Vagina (tissue), 2 donors: ENCODE measurements at regions of chr11 and their contacts with region 1.

Region 1: GRCh38 chr11:12673924-12674570 is at the start of gene TEAD1:
- DNase-seq: peak in 1 of 2 donors; percentile 96
- H3K4me3 ChIP-seq: peak within 1 kb of the TSS; percentile 72 to 98
- H3K27ac ChIP-seq: peak within 1 kb of the TSS; percentile 93
- H3K4me1 ChIP-seq: peaks cover 39% of the 10 kb centered on the region
- H3K27me3 ChIP-seq: no peaks in the 10 kb centered on the region
- CTCF ChIP-seq: no peak
- POLR2A ChIP-seq: peak in 1 of 2 donors; percentile 69
- total RNA-seq, gene TEAD1: 50.3 TPM

Region 2: GRCh38 chr11:12377824-12378593 is 296.0 kb before region 1 on chr11:
- intact Hi-C with region 1: loop called (anchors 10 kb)
- DNase-seq: no peak
- H3K4me3 ChIP-seq: peak overlapping the region; percentile 60 to 87
- H3K27ac ChIP-seq: peak overlapping the region; percentile 93
- H3K4me1 ChIP-seq: peaks cover 32% of the 10 kb centered on the region
- H3K27me3 ChIP-seq: no peaks in the 10 kb centered on the region
- CTCF ChIP-seq: peak in 1 of 3 experiments; percentile 19
- POLR2A ChIP-seq: no peak

Region 3: DNA sequence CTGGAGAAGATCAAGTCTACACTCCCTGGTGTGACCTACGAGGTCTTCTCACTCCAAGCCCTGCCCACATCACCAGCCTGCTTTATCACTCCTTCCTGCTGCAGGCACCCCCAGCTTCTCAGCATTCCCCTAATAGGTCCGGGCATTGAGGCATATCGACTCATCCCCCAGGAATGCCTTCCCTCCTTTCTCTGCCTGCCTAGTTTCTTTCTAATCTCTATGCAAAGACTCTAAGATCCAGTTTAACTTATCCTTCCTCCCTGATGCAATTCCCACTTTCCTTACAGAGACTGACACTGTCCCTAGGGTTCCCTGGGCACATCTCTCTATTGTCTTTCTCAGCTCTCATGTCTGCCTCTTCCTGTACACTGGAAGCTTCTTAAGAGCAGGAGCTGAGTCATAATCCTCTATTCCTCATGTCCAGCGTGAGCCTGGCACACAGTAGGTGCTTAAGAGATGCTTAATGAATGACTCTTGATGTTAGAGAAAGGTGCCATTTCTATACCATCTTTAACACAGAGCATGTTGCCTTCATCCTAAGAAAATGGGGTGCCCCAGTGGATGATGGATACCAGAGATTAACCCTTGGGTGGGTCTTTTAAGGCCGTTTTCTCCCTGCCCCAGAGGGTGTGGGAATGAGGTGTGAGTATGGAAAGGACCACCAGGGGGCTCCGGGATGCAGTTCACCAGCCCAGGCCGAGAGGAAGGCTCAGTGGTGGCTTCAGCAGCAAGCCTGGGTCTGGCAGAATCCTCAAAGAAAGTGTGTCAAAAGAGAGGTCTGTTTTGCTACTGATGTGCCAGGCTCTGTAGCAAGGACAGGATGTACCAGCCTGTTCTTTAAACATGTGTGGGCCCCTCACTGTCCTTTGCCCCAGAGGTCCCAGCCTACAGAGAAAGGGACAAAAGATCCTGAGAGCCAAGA is 262.0 kb before region 1 on chr11:
- intact Hi-C with region 1: loop called (anchors 10 kb)
- DNase-seq: no peak
- H3K4me3 ChIP-seq: no peak overlapping the region
- H3K27ac ChIP-seq: peak overlapping the region; percentile 86
- H3K4me1 ChIP-seq: peaks cover 70% of the 10 kb centered on the region
- H3K27me3 ChIP-seq: no peaks in the 10 kb centered on the region
- CTCF ChIP-seq: peak; percentile 45 to 83 (median 45)
- POLR2A ChIP-seq: no peak

Region 4: GRCh38 chr11:12813371-12814225 is 139.6 kb after region 1 on chr11:
- intact Hi-C with region 1: loop called (anchors 10 kb)
- DNase-seq: no peak
- H3K4me3 ChIP-seq: no peak overlapping the region
- H3K27ac ChIP-seq: peak overlapping the region; percentile 80
- H3K4me1 ChIP-seq: peaks cover 68% of the 10 kb centered on the region
- H3K27me3 ChIP-seq: no peaks in the 10 kb centered on the region
- CTCF ChIP-seq: no peak
- POLR2A ChIP-seq: no peak

Region 5: DNA sequence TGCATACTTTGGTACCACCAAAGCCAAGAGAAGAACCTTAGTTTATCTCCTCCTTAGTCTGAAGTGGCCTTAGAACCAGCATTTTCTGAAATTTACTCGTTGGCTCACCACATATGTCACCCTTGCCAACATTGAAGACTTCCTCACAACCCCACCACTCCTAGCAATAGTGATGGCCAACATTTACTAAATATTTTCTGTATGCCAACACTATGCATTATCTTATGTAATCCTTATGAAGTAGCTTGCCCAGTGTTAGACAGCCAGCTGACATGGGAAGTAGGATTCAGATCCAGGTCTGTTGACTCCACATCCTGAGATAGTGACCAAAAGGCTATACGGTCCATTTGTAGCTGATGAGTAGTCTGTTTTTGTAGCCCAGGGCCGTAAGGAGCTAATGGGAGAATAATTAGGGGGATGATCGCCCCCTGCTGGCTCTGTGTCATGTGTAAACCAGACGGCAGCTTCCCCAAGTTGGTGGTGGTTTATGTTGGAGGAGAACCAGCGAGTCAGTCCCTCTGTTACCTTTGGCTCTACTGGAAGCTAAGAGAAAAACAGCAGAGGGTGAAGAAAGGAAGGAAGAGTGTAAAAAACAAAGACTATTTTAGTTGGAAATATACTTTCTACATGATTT is 214.6 kb after region 1 on chr11:
- intact Hi-C with region 1: loop called (anchors 10 kb)
- DNase-seq: no peak
- H3K4me3 ChIP-seq: no peak overlapping the region
- H3K27ac ChIP-seq: peak overlapping the region; percentile 70
- H3K4me1 ChIP-seq: peaks cover 14% of the 10 kb centered on the region
- H3K27me3 ChIP-seq: no peaks in the 10 kb centered on the region
- CTCF ChIP-seq: peak; percentile 22 to 69 (median 59)
- POLR2A ChIP-seq: no peak